CD14-positive monocyte (primary cell): ENCODE measurements at regions of chr13 and their contacts with region 1.

Region 1: GRCh38 chr13:98672944-98673545 is 79.4 kb downstream of the SLC15A1 start:
- DNase-seq: peak; percentile 39 to 75 (median 73)
- H3K4me3 ChIP-seq: no peak overlapping the region
- H3K4me3 Mint-ChIP-seq: no peak overlapping the region
- H3K27ac ChIP-seq: no peak overlapping the region
- H3K27ac Mint-ChIP-seq: peak overlapping the region in 2 of 7 donors; percentile 22 to 23
- H3K4me1 ChIP-seq: peaks cover 7 to 9% of the 10 kb centered on the region in 2 donors
- H3K4me1 Mint-ChIP-seq: peaks cover 15% of the 10 kb centered on the region
- H3K27me3 ChIP-seq: no peaks in the 10 kb centered on the region
- H3K27me3 Mint-ChIP-seq: peaks cover 3 to 17% (median 14%) of the 10 kb centered on the region in 3 donors
- CTCF ChIP-seq: peak; percentile 89

Region 2: GRCh38 chr13:97855570-97856303 is 817.3 kb before region 1 on chr13:
- intact Hi-C with region 1: loop called in 1 of 2 experiments (anchors 5 kb)
- DNase-seq: peak in 2 of 3 donors; percentile 1 to 13
- H3K4me3 ChIP-seq: no peak overlapping the region
- H3K4me3 Mint-ChIP-seq: no peak overlapping the region
- H3K27ac ChIP-seq: no peak overlapping the region
- H3K27ac Mint-ChIP-seq: no peak overlapping the region
- H3K4me1 ChIP-seq: no peaks in the 10 kb centered on the region
- H3K4me1 Mint-ChIP-seq: peaks cover 4% of the 10 kb centered on the region
- H3K27me3 ChIP-seq: no peaks in the 10 kb centered on the region
- H3K27me3 Mint-ChIP-seq: peaks cover 0 to 6% (median 4%) of the 10 kb centered on the region in 3 donors
- CTCF ChIP-seq: peak; percentile 71